Activated CD8-positive, alpha-beta T cell treated with anti-CD3 and anti-CD28 coated beads for 36 hours (primary cell): ENCODE measurements at regions of chr1 and their contacts with region 1.

Region 1: DNA sequence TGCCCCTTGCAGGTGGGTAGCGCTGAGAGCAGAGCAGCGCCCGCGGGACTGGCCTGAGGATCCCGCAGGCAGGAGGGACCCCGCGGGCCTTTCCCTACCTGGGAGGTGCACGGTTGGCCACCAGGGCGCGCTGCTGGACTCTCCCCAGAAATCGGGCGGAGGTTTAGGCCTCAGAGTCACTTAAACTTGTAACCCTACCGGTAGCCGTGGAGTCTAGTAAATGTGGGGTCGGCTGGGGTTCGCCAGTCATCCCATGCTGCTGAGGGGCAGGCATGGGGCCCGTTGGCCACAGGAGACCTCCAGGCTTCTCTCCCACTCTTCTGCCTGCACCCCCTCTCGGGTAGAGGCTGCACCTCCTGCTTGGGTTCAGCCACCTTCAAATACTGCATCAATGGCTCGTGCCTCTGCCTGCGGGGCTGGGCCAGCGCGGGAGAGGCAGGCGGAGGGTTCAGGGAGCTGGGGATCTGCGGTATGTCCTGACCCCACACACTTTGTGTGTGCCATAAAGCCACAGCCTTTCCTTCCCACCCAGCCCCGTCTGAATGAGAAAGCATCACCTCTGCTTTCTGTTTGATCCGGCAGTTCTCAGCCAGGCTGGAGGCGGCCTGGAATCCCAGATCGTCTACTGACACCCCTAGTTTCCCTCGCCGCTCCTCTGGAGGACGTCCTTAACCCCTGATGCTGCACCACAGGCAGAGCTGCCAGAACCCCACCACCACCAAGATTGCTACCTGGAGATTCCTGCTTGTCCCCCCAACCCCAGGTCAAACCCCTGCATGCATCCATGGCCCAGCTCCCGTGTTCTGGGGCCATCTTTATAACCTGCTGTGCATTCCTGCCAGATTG is 12.3 kb upstream of the GSTM4 start:
- DNase-seq: peak; percentile 94
- ATAC-seq: peak; percentile 95
- H3K4me3 Mint-ChIP-seq: no peak overlapping the region
- H3K27ac Mint-ChIP-seq: no peak overlapping the region
- H3K4me1 Mint-ChIP-seq: peaks cover 7% of the 10 kb centered on the region
- H3K27me3 Mint-ChIP-seq: peaks cover 1% of the 10 kb centered on the region
- CTCF ChIP-seq: peak; percentile 88

Region 2: DNA sequence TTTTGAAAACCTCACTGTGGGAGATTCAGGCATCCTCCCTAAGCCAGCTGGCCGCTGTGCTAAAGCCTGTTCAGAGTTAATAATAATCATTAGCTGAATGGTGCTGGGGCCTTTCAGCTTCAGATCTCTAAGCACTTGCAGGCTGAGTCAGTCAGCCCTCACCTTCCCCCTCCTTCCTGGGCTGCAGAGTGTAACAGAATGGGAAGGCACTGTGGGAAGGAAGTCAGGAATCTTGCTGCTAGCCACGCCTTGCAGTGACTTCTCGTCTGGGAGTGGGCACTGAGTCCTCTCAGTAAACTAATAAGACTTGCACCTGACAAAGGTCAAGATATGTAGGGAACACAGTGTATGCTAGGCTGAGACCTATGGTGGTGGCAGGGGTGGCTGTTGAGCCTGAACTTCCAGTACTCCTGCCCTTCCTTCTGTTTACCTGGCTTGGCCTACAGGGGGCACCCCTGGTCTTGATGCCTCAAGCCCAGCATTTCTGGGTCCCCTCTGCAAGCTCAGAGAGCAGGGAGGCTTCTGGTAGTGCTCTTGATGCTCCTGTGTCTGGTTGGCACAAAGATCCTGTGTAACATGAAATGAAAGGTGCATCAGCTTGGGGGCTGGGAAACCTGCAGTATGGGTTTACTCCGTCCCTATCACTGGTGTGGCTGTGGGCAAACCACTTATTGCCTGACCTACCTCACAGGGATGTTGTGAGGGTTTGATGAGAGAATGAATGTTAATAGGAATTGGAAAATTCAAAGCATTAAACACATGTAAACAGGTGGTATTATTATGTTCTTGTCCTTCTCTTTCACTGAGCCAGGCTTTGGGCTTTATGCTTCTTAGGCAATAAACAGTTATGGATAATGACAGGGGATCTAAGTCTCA is 143.7 kb before region 1 on chr1:
- CTCF ChIA-PET with region 1: interaction called, 11 read pairs
- POLR2A ChIA-PET with region 1: no interaction called
- intact Hi-C with region 1: no loop called
- DNase-seq: peak; percentile 77
- ATAC-seq: peak; percentile 37
- H3K4me3 Mint-ChIP-seq: no peak overlapping the region
- H3K27ac Mint-ChIP-seq: peak overlapping the region; percentile 79
- H3K4me1 Mint-ChIP-seq: peaks cover 86% of the 10 kb centered on the region
- H3K27me3 Mint-ChIP-seq: no peaks in the 10 kb centered on the region
- CTCF ChIP-seq: peak; percentile 64

Region 3: DNA sequence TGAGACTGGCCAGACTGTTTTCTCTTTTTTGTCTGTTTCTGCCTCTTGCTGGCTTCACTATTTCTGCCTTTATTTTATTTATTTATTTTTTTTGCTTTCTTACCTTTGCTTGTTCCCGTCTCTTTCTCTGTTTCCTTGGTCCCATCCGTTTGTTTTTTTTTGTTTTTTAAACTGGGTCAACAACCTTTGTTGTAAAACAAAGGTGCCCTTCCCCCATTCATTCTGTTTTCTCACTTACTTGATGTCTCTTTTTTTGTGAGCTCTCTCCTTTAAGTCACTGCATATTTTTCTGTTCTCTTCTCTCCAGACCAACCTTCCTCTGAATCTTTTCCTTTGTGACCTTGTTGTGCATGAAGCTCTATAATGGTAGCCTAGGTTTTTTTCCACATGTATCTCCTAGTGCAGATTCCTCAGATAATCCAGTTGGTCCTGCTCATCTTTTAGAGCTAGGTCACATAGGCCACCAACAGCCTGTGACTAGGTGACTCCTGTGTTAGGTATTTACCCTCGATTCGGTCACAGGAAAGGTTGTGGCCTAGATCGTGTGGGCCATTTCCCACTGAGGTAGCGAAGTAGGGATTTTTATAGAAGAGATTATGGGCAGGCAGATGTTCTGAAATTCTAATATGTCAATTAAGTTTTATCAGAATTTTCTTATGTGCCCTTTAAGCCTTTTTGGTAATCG is 79.3 kb before region 1 on chr1:
- CTCF ChIA-PET with region 1: interaction called, 21 read pairs
- POLR2A ChIA-PET with region 1: no interaction called
- intact Hi-C with region 1: no loop called
- DNase-seq: no peak
- ATAC-seq: no peak
- H3K4me3 Mint-ChIP-seq: no peak overlapping the region
- H3K27ac Mint-ChIP-seq: no peak overlapping the region
- H3K4me1 Mint-ChIP-seq: peaks cover 55% of the 10 kb centered on the region
- H3K27me3 Mint-ChIP-seq: no peaks in the 10 kb centered on the region
- CTCF ChIP-seq: no peak

Region 4: GRCh38 chr1:109598655-109599054 is 45.0 kb before region 1 on chr1:
- CTCF ChIA-PET with region 1: interaction called, 19 read pairs
- POLR2A ChIA-PET with region 1: no interaction called
- intact Hi-C with region 1: no loop called
- DNase-seq: no peak
- ATAC-seq: no peak
- H3K4me3 Mint-ChIP-seq: no peak overlapping the region
- H3K27ac Mint-ChIP-seq: no peak overlapping the region
- H3K4me1 Mint-ChIP-seq: peaks cover 15% of the 10 kb centered on the region
- H3K27me3 Mint-ChIP-seq: no peaks in the 10 kb centered on the region
- CTCF ChIP-seq: peak; percentile 23

Region 5: GRCh38 chr1:109630081-109630897 is 13.3 kb before region 1 on chr1:
- CTCF ChIA-PET with region 1: interaction called, 68 read pairs
- POLR2A ChIA-PET with region 1: interaction called, 5 read pairs
- intact Hi-C with region 1: no loop called
- DNase-seq: peak; percentile 57
- ATAC-seq: no peak
- H3K4me3 Mint-ChIP-seq: no peak overlapping the region
- H3K27ac Mint-ChIP-seq: no peak overlapping the region
- H3K4me1 Mint-ChIP-seq: peaks cover 10% of the 10 kb centered on the region
- H3K27me3 Mint-ChIP-seq: no peaks in the 10 kb centered on the region
- CTCF ChIP-seq: peak; percentile 53

Region 6: DNA sequence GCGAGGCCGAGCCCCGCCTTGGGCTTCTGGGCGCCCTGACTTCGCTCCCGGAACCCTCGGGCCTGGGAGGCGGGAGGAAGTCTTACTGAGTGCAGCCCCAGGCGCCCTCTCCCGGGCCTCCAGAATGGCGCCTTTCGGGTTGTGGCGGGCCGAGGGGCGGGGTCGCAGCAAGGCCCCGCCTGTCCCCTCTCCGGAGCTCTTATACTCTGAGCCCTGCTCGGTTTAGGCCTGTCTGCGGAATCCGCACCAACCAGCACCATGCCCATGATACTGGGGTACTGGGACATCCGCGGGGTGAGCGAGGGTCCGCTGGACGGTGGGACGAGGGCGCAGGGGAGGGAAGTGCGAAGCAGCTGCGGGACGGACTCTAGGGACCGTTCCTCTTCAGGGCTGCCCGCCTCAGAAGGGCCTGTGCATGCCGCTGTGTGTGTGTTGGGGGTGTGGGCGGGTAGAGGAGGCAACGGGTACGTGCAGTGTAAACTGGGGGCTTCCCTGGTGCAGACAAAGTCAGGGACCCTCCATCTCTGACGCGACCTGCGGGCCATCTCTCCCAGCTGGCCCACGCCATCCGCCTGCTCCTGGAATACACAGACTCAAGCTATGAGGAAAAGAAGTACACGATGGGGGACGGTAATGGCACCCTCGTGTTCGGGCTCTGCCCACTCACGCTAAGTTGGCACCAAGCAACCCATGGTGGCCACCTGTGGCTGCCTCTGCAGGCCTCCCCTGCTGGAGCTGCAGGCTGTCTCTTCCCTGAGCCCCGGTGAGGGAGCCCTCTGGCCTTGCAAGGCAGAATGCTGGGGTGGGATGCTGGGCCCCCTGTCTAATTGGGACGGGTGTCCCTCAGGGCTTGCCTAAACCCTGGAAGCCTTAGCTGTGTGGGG is 44.2 kb after region 1 on chr1 and contains the start of gene GSTM1:
- CTCF ChIA-PET with region 1: interaction called, 22 read pairs
- POLR2A ChIA-PET with region 1: interaction called, 3 read pairs
- intact Hi-C with region 1: no loop called
- DNase-seq: peak; percentile 84
- ATAC-seq: peak; percentile 98
- H3K4me3 Mint-ChIP-seq: peak within 1 kb of the TSS; percentile 85
- H3K27ac Mint-ChIP-seq: peak within 1 kb of the TSS; percentile 91
- H3K4me1 Mint-ChIP-seq: peaks cover 10% of the 10 kb centered on the region
- H3K27me3 Mint-ChIP-seq: no peaks in the 10 kb centered on the region
- CTCF ChIP-seq: no peak
- total RNA-seq, gene GSTM1: 47.9 to 49.6 TPM

Region 7: GRCh38 chr1:109750241-109750882 is 106.8 kb after region 1 on chr1:
- CTCF ChIA-PET with region 1: interaction called, 15 read pairs
- POLR2A ChIA-PET with region 1: no interaction called
- intact Hi-C with region 1: no loop called
- DNase-seq: no peak
- ATAC-seq: no peak
- H3K4me3 Mint-ChIP-seq: no peak overlapping the region
- H3K27ac Mint-ChIP-seq: no peak overlapping the region
- H3K4me1 Mint-ChIP-seq: no peaks in the 10 kb centered on the region
- H3K27me3 Mint-ChIP-seq: peaks cover 12% of the 10 kb centered on the region
- CTCF ChIP-seq: no peak

Region 8: DNA sequence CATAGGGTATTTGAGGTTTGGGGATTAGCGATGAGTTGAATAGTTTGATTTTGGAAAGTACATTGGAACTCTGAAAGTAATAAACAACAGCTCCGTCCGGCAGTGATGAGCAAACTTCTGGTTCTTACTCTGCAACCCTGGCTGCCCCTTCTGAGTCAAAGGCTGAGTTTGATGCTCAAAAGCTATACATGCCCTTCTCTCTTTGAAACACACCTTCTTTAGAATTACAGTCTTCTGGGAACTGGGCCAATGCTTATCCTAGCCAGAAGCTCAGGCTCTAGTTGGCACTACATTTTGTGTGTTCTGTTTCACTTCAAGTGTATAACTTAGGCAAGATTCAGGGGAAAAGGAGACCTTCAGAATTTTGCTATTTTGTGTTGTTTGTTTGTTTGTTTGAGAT is 350.3 kb after region 1 on chr1:
- CTCF ChIA-PET with region 1: no interaction called
- POLR2A ChIA-PET with region 1: no interaction called
- intact Hi-C with region 1: no loop called
- DNase-seq: no peak
- ATAC-seq: no peak
- H3K4me3 Mint-ChIP-seq: no peak overlapping the region
- H3K27ac Mint-ChIP-seq: no peak overlapping the region
- H3K4me1 Mint-ChIP-seq: peaks cover 21% of the 10 kb centered on the region
- H3K27me3 Mint-ChIP-seq: no peaks in the 10 kb centered on the region
- CTCF ChIP-seq: no peak